Caco-2 (cell line): ENCODE measurements at regions of chr20 and their contacts with region 1.

Region 1: GRCh38 chr20:34825530-34826362 is at the start of gene NCOA6:
- DNase-seq: peak; percentile 92 to 94
- H3K4me3 ChIP-seq: peak within 1 kb of the TSS; percentile 97
- H3K4me3 Mint-ChIP-seq: peak within 1 kb of the TSS; percentile 92
- H3K27ac Mint-ChIP-seq: peak within 1 kb of the TSS; percentile 83
- H3K4me1 ChIP-seq: peaks cover 15% of the 10 kb centered on the region
- H3K4me1 Mint-ChIP-seq: peaks cover 20% of the 10 kb centered on the region
- H3K27me3 ChIP-seq: no peaks in the 10 kb centered on the region
- H3K27me3 Mint-ChIP-seq: no peaks in the 10 kb centered on the region
- CTCF ChIP-seq: no peak
- total RNA-seq, gene NCOA6: 65.1 and 72.7 TPM in 2 replicates

Region 2: DNA sequence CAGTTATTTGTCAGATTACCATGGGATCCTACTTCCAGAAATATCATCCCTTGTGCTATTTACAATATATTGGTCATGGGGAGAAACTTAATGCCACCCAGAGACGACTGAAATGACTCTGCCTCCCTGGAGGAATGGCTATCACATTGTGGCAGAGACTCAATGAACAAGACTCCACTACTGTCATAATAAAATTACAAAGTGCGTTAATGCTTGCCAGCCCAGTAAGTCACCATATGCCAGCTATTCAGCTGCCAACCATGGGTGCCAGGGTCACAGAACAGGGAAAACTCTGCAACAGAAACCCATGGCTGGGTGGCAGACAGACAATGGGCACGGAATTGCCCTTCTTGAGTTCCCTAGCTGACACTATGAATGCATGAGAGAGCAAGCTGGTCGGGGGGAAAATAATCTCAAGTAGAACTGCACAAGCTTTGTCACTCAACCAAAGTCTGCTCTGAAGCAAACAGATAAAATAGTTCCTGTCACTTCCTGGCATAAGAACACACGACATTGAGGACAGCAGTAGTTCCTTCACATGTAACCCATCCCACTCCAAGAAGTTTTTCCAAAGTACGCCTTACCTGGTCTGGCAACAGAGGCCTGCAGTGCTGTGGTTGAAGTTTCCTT is 89.5 kb before region 1 on chr20:
- CTCF ChIA-PET with region 1: no interaction called
- POLR2A ChIA-PET with region 1: no interaction called
- intact Hi-C with region 1: no loop called
- DNase-seq: no peak
- H3K4me3 ChIP-seq: no peak overlapping the region
- H3K4me3 Mint-ChIP-seq: no peak overlapping the region
- H3K27ac Mint-ChIP-seq: no peak overlapping the region
- H3K4me1 ChIP-seq: no peaks in the 10 kb centered on the region
- H3K4me1 Mint-ChIP-seq: no peaks in the 10 kb centered on the region
- H3K27me3 ChIP-seq: no peaks in the 10 kb centered on the region
- H3K27me3 Mint-ChIP-seq: no peaks in the 10 kb centered on the region
- CTCF ChIP-seq: no peak

Region 3: DNA sequence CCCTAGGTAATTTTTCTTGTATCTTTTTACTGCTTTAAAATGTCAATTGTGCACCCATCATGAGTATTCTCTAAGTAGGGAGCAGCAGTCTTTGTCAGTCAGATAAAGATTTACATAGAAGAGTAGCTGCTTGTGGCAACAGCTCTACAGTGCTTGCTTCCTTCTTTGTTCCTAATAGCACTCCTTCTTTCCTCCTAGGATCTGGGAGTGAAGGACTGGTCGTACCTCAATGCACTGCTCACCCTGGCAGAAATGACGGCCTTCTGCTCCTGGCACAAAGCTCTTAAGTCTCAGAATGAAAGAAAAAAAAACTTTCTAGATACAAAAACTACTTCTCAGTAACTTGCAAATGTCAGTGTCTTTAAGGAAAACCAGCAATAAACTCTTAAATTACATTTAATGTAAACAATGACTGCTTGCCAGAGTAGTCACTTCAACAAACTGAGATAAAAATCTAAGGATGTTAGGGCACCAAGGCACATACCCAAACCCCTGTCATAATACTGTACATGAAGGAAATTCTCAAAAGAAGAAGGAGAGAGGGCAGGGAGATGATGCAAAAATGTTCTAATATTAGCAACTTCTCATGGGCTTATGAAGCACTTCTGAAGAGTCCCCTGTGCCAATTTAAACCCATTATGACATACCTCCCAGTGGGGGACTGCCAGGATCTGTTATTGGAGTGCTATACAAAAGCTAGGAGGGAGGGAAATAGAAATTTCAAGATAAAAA is 34.3 kb before region 1 on chr20:
- CTCF ChIA-PET with region 1: no interaction called
- POLR2A ChIA-PET with region 1: no interaction called
- intact Hi-C with region 1: no loop called
- DNase-seq: no peak
- H3K4me3 ChIP-seq: no peak overlapping the region
- H3K4me3 Mint-ChIP-seq: no peak overlapping the region
- H3K27ac Mint-ChIP-seq: no peak overlapping the region
- H3K4me1 ChIP-seq: no peaks in the 10 kb centered on the region
- H3K4me1 Mint-ChIP-seq: peaks cover under 1% of the 10 kb centered on the region
- H3K27me3 ChIP-seq: no peaks in the 10 kb centered on the region
- H3K27me3 Mint-ChIP-seq: no peaks in the 10 kb centered on the region
- CTCF ChIP-seq: no peak

Region 4: DNA sequence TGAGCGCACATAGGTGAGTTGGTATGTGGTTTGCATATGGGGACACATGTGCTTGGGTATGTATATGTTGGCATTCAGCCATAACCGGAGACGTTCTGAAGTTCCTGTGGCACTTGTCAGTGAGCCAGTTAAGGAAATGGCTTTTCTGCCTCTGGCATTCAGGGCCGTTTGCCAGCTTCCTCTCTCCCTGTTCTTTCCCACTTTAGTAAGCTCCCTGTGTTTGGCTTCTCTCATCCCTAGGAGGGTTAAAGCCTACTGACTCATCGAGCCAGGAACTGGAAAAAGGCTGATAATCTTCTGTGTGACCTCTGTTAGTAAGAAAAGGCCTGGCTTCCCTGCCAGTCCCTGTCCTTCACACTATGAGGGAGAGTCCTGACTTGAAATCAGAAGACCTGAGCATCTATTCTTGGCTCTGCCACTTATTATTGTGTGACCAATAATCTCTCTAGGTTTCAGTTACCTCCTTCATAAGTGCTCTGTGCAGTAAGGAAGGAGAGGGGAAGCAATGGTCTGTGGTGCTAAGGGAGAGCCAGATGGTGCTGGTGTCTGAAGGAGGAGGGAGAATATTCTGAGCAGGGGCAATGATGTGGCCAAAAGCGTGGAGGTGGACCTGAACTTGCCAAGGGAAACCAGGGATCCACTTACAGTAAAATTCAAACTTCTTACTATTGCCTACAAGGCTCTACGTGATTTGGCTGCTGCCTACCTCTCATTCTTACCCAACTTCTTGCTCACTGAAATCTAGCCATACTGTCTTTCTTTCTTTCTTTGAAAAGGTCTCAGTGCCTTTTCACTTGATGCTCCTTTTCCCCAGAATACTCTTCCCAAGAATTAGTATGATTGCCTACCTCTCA is 82.1 kb after region 1 on chr20:
- CTCF ChIA-PET with region 1: no interaction called
- POLR2A ChIA-PET with region 1: interaction called, 10 read pairs
- intact Hi-C with region 1: no loop called
- DNase-seq: no peak
- H3K4me3 ChIP-seq: no peak overlapping the region
- H3K4me3 Mint-ChIP-seq: no peak overlapping the region
- H3K27ac Mint-ChIP-seq: no peak overlapping the region
- H3K4me1 ChIP-seq: peaks cover 14% of the 10 kb centered on the region
- H3K4me1 Mint-ChIP-seq: peaks cover 15% of the 10 kb centered on the region
- H3K27me3 ChIP-seq: no peaks in the 10 kb centered on the region
- H3K27me3 Mint-ChIP-seq: no peaks in the 10 kb centered on the region
- CTCF ChIP-seq: no peak

Region 5: GRCh38 chr20:35111141-35111888 is 285.6 kb after region 1 on chr20:
- CTCF ChIA-PET with region 1: no interaction called
- POLR2A ChIA-PET with region 1: no interaction called
- intact Hi-C with region 1: no loop called
- DNase-seq: no peak
- H3K4me3 ChIP-seq: no peak overlapping the region
- H3K4me3 Mint-ChIP-seq: no peak overlapping the region
- H3K27ac Mint-ChIP-seq: no peak overlapping the region
- H3K4me1 ChIP-seq: no peaks in the 10 kb centered on the region
- H3K4me1 Mint-ChIP-seq: no peaks in the 10 kb centered on the region
- H3K27me3 ChIP-seq: no peaks in the 10 kb centered on the region
- H3K27me3 Mint-ChIP-seq: no peaks in the 10 kb centered on the region
- CTCF ChIP-seq: no peak